Gastrocnemius medialis (tissue), 4 donors: ENCODE measurements at regions of chr14 and their contacts with region 1.

Region 1: DNA sequence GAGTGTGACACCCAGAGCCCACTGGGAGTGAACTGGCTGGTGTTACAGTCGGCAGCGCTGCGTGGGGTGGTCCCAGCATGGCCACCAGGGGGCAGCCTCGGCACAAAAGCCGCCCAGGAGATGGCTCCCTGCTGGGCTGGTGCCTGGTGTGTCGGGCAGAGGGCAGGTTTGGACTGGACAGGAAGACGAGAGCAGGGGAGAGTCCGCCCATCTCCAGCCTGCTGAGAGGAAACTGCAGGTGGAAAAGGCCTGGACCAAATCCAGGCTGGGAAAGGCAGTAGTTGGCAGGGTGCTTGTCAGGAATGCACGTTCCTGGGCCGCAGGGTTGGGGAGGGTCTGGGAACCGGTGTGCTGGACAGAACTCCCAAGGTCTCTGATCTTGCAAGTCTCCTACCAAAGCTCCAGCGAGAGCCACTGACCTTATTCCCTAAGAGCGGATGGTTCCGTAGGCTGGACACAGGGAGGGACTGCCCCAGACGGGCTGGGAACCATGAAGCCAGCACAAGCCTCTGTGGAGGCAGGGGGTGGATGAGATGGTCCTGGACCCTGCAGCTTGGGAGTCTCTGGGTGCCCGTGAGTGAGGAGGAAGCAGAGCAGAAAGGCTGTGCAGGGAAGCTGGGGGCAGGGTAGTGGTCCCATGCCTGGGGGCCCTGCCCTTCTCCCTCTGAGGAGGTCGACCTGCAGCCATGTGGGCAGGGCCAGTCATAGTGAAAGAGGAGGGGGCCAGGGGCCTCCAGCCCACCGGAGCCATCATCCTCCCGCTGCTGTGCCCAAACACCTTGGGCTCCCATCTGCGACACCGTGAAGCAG is 1.8 kb downstream of the AHNAK2 start:
- DNase-seq: peak; percentile 59 to 74
- ATAC-seq: peak; percentile 27 to 54
- H3K4me3 ChIP-seq: no peak overlapping the region
- H3K27ac ChIP-seq: no peak overlapping the region
- H3K4me1 ChIP-seq: peaks cover 18% of the 10 kb centered on the region in 2 donors
- H3K27me3 ChIP-seq: peaks cover 0 to 13% (median 8%) of the 10 kb centered on the region in 3 donors
- CTCF ChIP-seq: peak; percentile 84 to 97 (median 92)
- POLR2A ChIP-seq: no peak

Region 2: DNA sequence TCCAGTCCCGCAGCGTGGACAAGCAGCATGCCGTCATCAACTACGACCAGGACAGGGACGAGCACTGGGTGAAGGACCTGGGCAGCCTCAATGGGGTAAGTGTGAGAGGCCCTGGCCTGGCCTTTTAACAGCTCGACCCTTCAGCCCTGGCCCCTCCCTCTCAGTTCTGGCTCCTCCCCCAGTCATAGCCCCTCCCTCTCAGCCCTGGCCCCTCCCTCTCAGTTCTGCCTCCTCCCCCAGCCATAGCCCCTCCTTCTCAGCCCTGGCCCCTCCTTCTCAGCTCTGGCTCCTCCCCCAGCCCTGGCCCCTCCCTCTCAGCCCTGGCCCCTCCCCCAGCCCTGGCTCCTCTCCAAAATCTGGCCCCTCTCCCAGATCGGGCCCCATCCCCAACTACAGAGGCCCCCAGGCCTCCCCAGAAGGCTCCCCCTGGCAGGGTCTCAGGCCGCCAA is 100.1 kb before region 1 on chr14:
- in situ Hi-C with region 1: no loop called
- intact Hi-C with region 1: no loop called
- DNase-seq: peak in 1 of 2 donors; percentile 28
- ATAC-seq: peak; percentile 39 to 77
- H3K4me3 ChIP-seq: no peak overlapping the region
- H3K27ac ChIP-seq: no peak overlapping the region
- H3K4me1 ChIP-seq: peaks cover 5 to 12% of the 10 kb centered on the region in 2 donors
- H3K27me3 ChIP-seq: no peaks in the 10 kb centered on the region
- CTCF ChIP-seq: no peak
- POLR2A ChIP-seq: no peak

Region 3: GRCh38 chr14:104932676-104933631 is 43.4 kb before region 1 on chr14:
- in situ Hi-C with region 1: no loop called
- intact Hi-C with region 1: loop called (anchors 1 kb)
- DNase-seq: peak; percentile 32 to 55
- ATAC-seq: peak; percentile 72 to 84
- H3K4me3 ChIP-seq: peak overlapping the region; percentile 57 to 81 (median 63)
- H3K27ac ChIP-seq: peak overlapping the region in 1 of 4 donors; percentile 47
- H3K4me1 ChIP-seq: peaks cover 0 to 7% of the 10 kb centered on the region in 2 donors
- H3K27me3 ChIP-seq: peaks cover 0 to 21% (median 4%) of the 10 kb centered on the region in 3 donors
- CTCF ChIP-seq: peak; percentile 28 to 83 (median 70)
- POLR2A ChIP-seq: no peak

Region 4: DNA sequence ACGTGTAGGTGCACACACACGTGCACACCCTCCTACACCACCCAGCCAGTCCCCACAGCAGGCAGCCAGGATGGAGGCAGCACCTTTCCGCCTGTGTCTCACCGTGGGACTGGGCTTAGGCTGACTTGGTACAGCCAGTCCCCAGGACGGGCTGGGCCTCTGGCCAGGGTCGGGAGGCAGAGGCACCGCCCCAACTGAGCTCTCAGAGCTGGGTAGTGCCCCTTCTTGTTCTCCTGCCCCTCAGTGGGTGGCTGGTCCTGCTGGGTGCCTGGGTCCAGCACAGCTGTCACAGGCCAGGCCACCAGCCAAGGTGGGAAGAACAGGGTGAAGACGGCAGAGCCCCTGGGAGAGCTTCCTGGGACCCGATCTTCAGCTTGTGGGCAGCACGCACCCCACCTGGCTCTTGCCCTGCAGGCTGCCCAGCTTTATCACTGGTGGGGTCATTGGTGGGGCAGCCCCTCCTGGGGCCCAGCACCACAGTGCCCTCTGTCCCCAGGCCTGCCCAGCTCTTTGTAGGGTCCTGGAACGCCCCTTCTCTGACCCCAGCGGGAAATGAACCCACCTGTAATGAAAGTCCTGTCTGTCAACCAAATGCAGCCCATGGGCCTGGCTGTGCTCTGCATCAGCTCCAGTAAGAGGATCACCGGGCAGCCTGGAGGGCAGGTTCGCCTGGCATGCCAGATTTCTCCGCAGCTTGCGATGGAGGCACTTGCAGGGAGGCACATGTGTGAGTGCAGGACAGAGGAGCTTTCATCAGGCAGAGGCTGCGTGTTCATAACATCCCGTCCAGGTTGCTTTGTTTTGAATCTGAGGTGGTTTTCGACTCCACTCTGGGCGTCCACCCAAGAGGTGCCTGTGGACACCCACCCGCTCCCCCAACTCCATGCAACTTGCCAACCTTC is 29.8 kb after region 1 on chr14:
- in situ Hi-C with region 1: no loop called
- intact Hi-C with region 1: no loop called
- DNase-seq: no peak
- ATAC-seq: no peak
- H3K4me3 ChIP-seq: no peak overlapping the region
- H3K27ac ChIP-seq: no peak overlapping the region
- H3K4me1 ChIP-seq: no peaks in the 10 kb centered on the region
- H3K27me3 ChIP-seq: no peaks in the 10 kb centered on the region
- CTCF ChIP-seq: no peak
- POLR2A ChIP-seq: no peak

Region 5: GRCh38 chr14:105020815-105021655 is 44.6 kb after region 1 on chr14 and contains the start of gene CDCA4:
- in situ Hi-C with region 1: no loop called
- intact Hi-C with region 1: loop called (anchors 1 kb)
- DNase-seq: peak; percentile 88 to 94
- ATAC-seq: peak; percentile 97
- H3K4me3 ChIP-seq: peak within 1 kb of the TSS; percentile 70 to 83 (median 80)
- H3K27ac ChIP-seq: peak within 1 kb of the TSS; percentile 75 to 91 (median 86)
- H3K4me1 ChIP-seq: peaks cover 16 to 23% of the 10 kb centered on the region in 2 donors
- H3K27me3 ChIP-seq: no peaks in the 10 kb centered on the region
- CTCF ChIP-seq: peak in 1 of 5 experiments; percentile 16
- POLR2A ChIP-seq: peak; percentile 75 to 82
- total RNA-seq, gene CDCA4: 0.71 to 2.2 (median 1.8) TPM